ENCODE measurements at regions of chr5 and their contacts with region 1.

Region 1: DNA sequence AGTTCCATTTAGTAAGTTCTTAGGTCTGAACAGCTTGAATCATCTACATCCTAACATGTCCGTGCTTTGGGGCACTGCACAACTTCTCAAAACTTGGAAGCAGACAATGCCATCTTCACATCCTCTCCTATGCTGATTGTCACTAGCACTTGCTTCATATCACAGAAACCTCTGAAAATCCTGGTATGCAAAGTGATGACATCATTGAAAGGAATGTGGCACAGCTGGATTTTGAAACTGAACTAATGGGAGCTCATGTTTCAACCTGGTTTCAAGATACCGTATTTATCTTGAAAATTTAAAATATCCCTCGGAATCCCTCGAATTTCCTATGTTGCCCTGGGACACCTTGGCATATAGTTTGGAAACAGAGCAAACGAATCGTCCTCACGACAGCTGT is 490.2 kb upstream of the DAP start:
- DNase-seq: peak; percentile 53
- H3K4me3 Mint-ChIP-seq: peak overlapping the region; percentile 44
- H3K27ac Mint-ChIP-seq: peak overlapping the region; percentile 27
- H3K4me1 Mint-ChIP-seq: peaks cover 27% of the 10 kb centered on the region
- H3K27me3 Mint-ChIP-seq: no peaks in the 10 kb centered on the region
- CTCF ChIP-seq: no peak

Region 2: DNA sequence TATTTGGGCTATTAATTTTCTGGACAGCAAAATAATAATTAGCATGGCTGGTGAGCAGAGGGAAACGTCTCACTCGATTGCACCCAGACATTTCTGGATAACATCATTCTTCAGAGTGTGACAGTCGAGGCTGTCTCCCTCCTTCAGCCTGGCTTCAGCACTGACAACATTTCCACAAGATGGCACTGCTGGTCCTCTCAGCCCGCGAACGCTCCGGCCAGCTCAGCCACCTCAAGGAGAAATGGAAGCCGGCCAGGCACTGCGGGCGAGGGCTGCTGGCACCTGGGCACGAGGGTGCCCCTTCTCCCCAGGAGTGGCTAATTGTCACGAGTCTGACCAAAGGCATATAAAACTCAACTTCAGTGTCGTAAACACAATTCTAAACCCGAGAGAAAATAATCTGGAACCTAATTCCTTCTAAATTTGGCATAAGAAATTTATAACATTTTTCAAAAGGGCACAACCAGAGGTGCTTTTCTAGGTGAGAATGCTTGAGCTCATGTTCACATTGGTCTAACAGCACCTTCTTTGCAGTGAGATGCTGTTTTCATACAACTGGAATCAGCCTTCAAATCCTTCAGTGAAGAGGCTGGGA is 556.1 kb before region 1 on chr5:
- CTCF ChIA-PET with region 1: no interaction called
- intact Hi-C with region 1: loop called (anchors 5 kb)
- DNase-seq: peak; percentile 78
- H3K4me3 Mint-ChIP-seq: no peak overlapping the region
- H3K27ac Mint-ChIP-seq: no peak overlapping the region
- H3K4me1 Mint-ChIP-seq: peaks cover 34% of the 10 kb centered on the region
- H3K27me3 Mint-ChIP-seq: no peaks in the 10 kb centered on the region
- CTCF ChIP-seq: peak; percentile 52

Region 3: GRCh38 chr5:10854506-10855277 is 396.6 kb before region 1 on chr5:
- CTCF ChIA-PET with region 1: no interaction called
- intact Hi-C with region 1: no loop called
- DNase-seq: no peak
- H3K4me3 Mint-ChIP-seq: no peak overlapping the region
- H3K27ac Mint-ChIP-seq: no peak overlapping the region
- H3K4me1 Mint-ChIP-seq: no peaks in the 10 kb centered on the region
- H3K27me3 Mint-ChIP-seq: peaks cover 100% of the 10 kb centered on the region
- CTCF ChIP-seq: no peak

Region 4: DNA sequence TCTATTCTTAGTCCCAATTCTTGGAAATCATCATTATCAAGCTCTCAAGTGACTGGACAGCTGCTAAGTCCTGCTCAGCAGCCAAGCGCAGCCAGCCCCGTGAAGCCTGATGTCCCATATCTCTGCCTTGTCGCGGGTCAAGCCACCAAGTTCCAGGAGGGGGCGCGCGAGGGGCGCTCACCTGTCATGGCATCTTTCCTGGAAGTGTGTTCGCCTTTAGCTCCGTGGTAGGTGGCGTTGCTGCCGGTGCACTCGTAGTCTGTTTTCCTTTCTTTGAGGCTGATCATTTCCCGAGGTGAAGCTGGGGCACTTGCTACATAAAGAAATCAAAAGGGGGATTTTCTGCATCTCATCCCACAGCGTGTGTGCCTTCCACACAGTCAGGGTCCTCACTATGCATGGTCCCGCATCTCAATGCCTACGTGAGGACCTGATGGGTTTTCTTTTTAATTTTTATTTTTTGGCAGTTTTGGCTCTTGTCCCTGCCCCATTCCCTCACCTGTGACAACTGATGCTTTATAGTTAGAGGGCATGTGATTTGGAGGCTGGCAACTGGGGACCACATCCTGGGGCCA is 263.2 kb before region 1 on chr5:
- CTCF ChIA-PET with region 1: no interaction called
- intact Hi-C with region 1: loop called (anchors 1 kb)
- DNase-seq: peak; percentile 93
- H3K4me3 Mint-ChIP-seq: peak overlapping the region; percentile 32
- H3K27ac Mint-ChIP-seq: no peak overlapping the region
- H3K4me1 Mint-ChIP-seq: peaks cover 13% of the 10 kb centered on the region
- H3K27me3 Mint-ChIP-seq: no peaks in the 10 kb centered on the region
- CTCF ChIP-seq: peak; percentile 79